HCT116 (cell line): ENCODE measurements at regions of chr1 and their contacts with region 1.

Region 1: GRCh38 chr1:246280551-246280950 is 226.5 kb downstream of the SMYD3 start:
- DNase-seq: peak; percentile 10
- ATAC-seq: peak; percentile 50; the same call in 1 of the 2 replicates
- H3K4me3 ChIP-seq: no peak overlapping the region
- H3K27ac ChIP-seq: no peak overlapping the region
- H3K4me1 ChIP-seq: no peaks in the 10 kb centered on the region
- H3K27me3 ChIP-seq: no peaks in the 10 kb centered on the region
- CTCF ChIP-seq: peak; percentile 22 to 44 (median 43); a peak in 3 of 6 replicates
- POLR2A ChIP-seq: no peak
- RAD21 ChIP-seq: peak; percentile 70

Region 2: GRCh38 chr1:245888809-245889208 is 391.7 kb before region 1 on chr1:
- CTCF ChIA-PET with region 1: interaction called, 3 read pairs
- POLR2A ChIA-PET with region 1: no interaction called
- RAD21 ChIA-PET with region 1: no interaction called
- intact Hi-C with region 1: loop called (anchors 10 kb)
- DNase-seq: peak; percentile 23
- ATAC-seq: peak; percentile 83
- H3K4me3 ChIP-seq: no peak overlapping the region
- H3K27ac ChIP-seq: no peak overlapping the region
- H3K4me1 ChIP-seq: no peaks in the 10 kb centered on the region
- H3K27me3 ChIP-seq: no peaks in the 10 kb centered on the region
- CTCF ChIP-seq: peak; percentile 35 to 70 (median 59); a peak in 5 of 6 replicates
- POLR2A ChIP-seq: no peak
- RAD21 ChIP-seq: peak; percentile 40

Region 3: GRCh38 chr1:246199086-246199645 is 81.4 kb before region 1 on chr1:
- CTCF ChIA-PET with region 1: no interaction called
- POLR2A ChIA-PET with region 1: no interaction called
- RAD21 ChIA-PET with region 1: no interaction called
- intact Hi-C with region 1: no loop called
- DNase-seq: no peak
- ATAC-seq: no peak
- H3K4me3 ChIP-seq: no peak overlapping the region
- H3K27ac ChIP-seq: no peak overlapping the region
- H3K4me1 ChIP-seq: no peaks in the 10 kb centered on the region
- H3K27me3 ChIP-seq: no peaks in the 10 kb centered on the region
- CTCF ChIP-seq: no peak
- POLR2A ChIP-seq: no peak
- RAD21 ChIP-seq: no peak

Region 4: DNA sequence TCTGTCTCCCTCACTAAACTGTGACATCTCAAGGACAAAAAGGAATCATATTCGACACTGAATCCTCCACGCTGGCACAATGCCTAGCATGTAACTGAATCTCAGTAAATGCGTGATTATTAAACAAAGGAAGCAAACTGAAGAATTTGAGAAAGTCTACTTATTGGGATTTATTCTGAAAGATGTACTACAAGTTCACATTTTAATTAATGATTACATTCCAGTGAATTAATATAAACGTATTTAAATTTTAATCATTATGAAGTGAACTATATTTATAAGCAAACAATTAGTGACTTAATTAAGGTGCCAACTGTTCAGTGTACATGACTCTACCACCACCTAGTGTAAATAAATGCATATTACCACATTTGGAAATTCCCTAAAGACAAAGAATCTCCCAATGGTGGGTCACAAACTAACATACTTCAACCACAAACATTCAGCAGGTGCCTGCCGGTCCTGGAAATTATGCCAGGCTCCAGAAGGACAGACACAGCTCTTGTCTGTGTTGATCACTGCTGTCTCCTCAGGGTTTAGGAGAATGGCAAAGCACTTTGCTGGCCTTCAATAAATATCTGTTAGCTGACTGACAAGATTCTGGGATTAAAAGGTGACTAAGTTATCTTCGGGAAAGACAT is 170.2 kb after region 1 on chr1:
- CTCF ChIA-PET with region 1: no interaction called
- POLR2A ChIA-PET with region 1: no interaction called
- RAD21 ChIA-PET with region 1: no interaction called
- intact Hi-C with region 1: loop called (anchors 10 kb)
- DNase-seq: peak; percentile 12
- ATAC-seq: peak; percentile 76
- H3K4me3 ChIP-seq: no peak overlapping the region
- H3K27ac ChIP-seq: no peak overlapping the region
- H3K4me1 ChIP-seq: no peaks in the 10 kb centered on the region
- H3K27me3 ChIP-seq: no peaks in the 10 kb centered on the region
- CTCF ChIP-seq: peak; percentile 48 to 65 (median 61); a peak in 4 of 6 replicates
- POLR2A ChIP-seq: no peak
- RAD21 ChIP-seq: peak; percentile 86